ENCODE measurements at regions of chr10 and their contacts with region 1.

Region 1: DNA sequence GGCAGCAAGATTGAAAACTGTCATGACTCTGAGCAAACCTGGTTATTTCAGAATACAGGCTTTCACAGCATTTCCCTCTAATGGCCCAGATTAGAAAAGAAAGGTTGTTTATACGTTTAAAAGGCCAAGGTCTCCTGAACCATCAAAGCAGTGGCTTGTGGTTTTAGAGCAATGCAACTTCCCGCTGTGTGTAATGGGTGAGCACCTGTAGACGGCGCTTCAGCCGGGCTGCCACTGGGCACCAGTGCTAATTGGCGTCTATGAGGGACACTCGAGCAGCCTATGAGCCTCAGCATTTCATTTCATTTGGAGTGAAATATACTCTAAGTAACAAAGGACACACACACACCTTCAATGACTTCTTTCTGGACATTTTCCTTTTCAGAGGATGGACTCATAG is 671.0 kb upstream of the FZD8 start:
- DNase-seq: no peak
- H3K4me3 ChIP-seq: no peak overlapping the region
- H3K27ac ChIP-seq: no peak overlapping the region
- H3K4me1 ChIP-seq: no peaks in the 10 kb centered on the region
- H3K27me3 ChIP-seq: no peaks in the 10 kb centered on the region
- CTCF ChIP-seq: no peak

Region 2: GRCh38 chr10:36266928-36267327 is 46.2 kb before region 1 on chr10:
- intact Hi-C with region 1: loop called (anchors 2 kb)
- DNase-seq: no peak
- H3K4me3 ChIP-seq: no peak overlapping the region
- H3K27ac ChIP-seq: no peak overlapping the region
- H3K4me1 ChIP-seq: peaks cover 0 to 7% (median 0%) of the 10 kb centered on the region in 4 donors
- H3K27me3 ChIP-seq: no peaks in the 10 kb centered on the region
- CTCF ChIP-seq: no peak

Measured in tibial artery (tissue), 4 donors.